Prostate gland (tissue), 2 donors: ENCODE measurements at regions of chr7 and their contacts with region 1.

Region 1: DNA sequence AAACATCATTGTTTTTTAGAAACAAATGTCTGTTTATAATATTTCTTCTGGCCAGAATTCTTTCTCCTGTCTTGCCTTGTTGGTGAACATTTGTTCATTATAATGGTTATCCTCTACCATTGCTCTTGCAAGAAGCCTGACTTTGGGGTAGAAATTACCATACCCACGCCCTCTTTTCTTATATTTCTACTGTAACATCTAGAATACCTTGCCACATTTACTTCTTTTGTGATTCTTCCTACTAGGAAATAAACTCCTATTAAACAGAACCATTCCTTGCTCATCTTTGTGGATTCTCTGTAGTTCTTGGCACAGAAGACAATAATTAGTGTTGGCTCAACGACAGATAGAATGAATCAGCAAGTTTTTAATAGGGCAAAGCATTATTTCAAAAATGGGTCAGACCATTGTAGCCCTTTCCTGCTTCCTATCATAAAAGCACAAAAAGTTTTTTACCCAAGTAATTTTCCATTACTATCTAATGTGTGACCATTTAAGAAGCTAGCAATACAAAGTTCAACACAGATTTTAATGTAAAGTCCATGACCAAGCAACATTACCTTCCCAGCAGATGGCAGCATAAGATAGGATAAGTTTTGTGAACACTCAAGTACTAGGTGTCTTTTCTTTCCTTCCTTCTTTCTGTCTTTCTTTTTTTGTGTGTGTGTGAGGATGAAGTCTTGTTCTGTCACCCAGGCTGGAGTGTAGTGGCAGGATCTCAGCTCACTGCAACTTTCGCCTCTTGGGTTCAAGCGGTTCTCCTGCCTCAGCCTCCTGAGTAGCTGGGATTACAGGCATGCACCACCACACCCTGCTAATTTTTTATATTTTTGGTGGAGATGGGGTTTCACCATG is 270.4 kb downstream of the HGF start:
- DNase-seq: peak; percentile 49
- H3K4me3 ChIP-seq: no peak overlapping the region
- H3K27ac ChIP-seq: peak overlapping the region; percentile 11 to 25
- H3K4me1 ChIP-seq: no peaks in the 10 kb centered on the region
- H3K27me3 ChIP-seq: peaks cover 3% of the 10 kb centered on the region
- CTCF ChIP-seq: peak; percentile 52 to 87 (median 64)
- POLR2A ChIP-seq: no peak

Region 2: GRCh38 chr7:81769891-81770727 is 270.6 kb after region 1 on chr7 and contains the start of gene HGF:
- intact Hi-C with region 1: loop called (anchors 5 kb)
- DNase-seq: peak; percentile 34
- H3K4me3 ChIP-seq: peak within 1 kb of the TSS; percentile 6 to 16
- H3K27ac ChIP-seq: peak within 1 kb of the TSS; percentile 26 to 46
- H3K4me1 ChIP-seq: no peaks in the 10 kb centered on the region
- H3K27me3 ChIP-seq: no peaks in the 10 kb centered on the region
- CTCF ChIP-seq: no peak
- POLR2A ChIP-seq: no peak
- total RNA-seq, gene HGF: 7.5 to 8.1 TPM

Region 3: DNA sequence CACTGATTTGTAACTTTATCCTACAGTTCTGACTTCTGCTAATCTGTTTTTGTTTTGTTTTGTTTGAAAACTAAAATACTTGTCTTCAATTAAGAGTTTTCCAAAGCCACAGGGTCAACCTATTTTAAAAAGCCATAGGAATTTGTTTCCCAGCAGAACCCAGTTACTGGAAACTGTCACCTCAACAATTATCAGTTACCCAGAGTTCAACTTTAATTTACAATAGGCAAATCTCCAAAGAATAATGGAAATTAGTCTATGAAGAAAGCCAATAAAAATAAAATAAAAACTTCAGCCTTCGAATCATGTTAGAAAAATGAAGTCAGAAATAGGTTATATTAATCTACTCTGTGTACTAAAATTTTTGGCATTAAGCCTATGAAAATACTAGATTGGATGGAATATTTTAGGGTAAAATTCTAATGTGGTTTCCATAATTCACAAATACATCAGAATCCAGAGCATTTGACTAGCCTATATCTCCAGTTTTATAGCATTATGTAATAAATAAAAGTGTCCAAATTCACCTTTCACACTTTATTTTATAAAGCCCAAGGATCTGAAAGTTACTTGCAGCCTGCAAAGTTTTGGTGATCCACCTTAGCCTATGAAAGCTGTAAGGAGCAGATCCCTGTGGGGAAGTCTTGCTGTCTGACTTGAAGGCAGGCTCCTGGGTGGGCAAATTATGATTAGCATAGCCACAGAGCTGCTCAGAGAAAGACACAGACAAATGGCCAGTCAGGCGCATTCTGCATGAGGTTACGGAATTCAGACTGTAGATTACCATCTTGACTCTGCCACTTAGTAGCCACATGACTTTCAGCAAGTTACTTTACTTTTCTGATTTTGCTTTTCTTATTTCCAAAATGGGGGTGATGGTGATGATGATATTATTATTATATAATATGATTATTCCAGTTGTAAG is 520.3 kb after region 1 on chr7:
- intact Hi-C with region 1: loop called (anchors 5 kb)
- DNase-seq: no peak
- H3K4me3 ChIP-seq: no peak overlapping the region
- H3K27ac ChIP-seq: no peak overlapping the region
- H3K4me1 ChIP-seq: no peaks in the 10 kb centered on the region
- H3K27me3 ChIP-seq: no peaks in the 10 kb centered on the region
- CTCF ChIP-seq: no peak
- POLR2A ChIP-seq: no peak

Region 4: DNA sequence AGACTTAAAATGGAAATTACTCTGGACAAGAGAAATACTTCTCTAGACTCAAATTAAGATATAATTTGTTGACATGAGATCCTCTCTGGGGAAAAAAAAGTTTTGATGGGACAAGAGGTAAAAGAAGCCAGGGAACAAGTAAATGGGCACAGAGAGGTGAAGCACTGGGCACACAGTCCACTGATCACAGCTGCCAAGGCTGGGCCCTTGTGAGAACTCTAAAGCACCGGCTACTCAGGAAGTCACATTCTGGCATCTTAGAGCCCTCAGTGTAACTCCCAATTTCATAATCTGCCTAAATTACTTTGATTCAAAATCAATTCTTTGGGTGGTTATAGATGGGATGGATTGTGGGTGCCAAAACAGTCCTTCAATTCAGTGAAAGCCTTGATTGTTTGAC is 1067.3 kb after region 1 on chr7:
- intact Hi-C with region 1: loop called (anchors 5 kb)
- DNase-seq: no peak
- H3K4me3 ChIP-seq: no peak overlapping the region
- H3K27ac ChIP-seq: no peak overlapping the region
- H3K4me1 ChIP-seq: no peaks in the 10 kb centered on the region
- H3K27me3 ChIP-seq: no peaks in the 10 kb centered on the region
- CTCF ChIP-seq: no peak
- POLR2A ChIP-seq: no peak